Heart right ventricle (tissue), 16 donors: ENCODE measurements at regions of chr20 and their contacts with region 1.

Region 1: GRCh38 chr20:52601295-52601971 is 370.7 kb upstream of the TSHZ2 start:
- DNase-seq: no peak
- ATAC-seq: no peak
- H3K4me3 ChIP-seq: no peak overlapping the region
- H3K27ac ChIP-seq: no peak overlapping the region
- H3K4me1 ChIP-seq: no peaks in the 10 kb centered on the region
- H3K27me3 ChIP-seq: peaks cover 0 to 3% (median 0%) of the 10 kb centered on the region in 7 donors
- CTCF ChIP-seq: no peak

Region 2: GRCh38 chr20:52564637-52565036 is 36.8 kb before region 1 on chr20:
- intact Hi-C with region 1: loop called in 1 of 10 experiments (anchors 2 kb)
- DNase-seq: no peak
- ATAC-seq: no peak
- H3K4me3 ChIP-seq: no peak overlapping the region
- H3K27ac ChIP-seq: no peak overlapping the region
- H3K4me1 ChIP-seq: no peaks in the 10 kb centered on the region
- H3K27me3 ChIP-seq: no peaks in the 10 kb centered on the region
- CTCF ChIP-seq: no peak

Region 3: DNA sequence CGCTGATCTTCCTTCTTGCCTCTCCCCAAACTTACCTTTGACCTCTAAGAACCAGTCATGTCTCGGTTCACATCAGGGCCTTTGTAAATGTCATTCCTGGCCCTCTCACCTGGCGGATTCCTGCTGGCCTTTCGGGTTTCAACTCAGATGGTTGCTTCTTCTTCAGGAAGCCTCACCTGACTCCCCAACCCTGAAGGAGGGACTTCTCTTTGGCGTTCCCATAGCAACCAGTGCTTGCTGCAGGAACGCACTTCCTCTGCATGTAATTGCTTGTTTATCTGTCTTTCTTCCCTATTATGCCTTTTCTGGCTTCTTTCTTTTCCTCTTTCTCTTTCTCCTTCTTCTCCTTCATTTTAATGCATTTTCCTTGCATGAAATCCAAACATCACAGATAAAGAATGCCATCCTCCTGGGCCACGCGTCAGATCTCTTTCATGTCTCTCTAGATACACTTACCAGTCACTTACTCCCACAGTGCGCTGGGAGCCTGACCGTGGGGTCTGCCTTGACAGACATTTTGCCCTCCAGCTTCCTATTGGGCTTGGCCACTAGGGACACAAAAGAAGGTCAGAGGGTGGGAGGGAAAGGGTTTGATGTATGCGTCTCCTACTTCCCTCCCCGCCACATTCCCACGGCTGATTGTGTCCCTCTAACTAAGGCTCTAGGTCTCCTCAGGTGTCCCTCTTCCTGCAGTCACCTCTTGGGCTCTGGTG is 75.0 kb after region 1 on chr20:
- intact Hi-C with region 1: no loop called
- DNase-seq: no peak
- ATAC-seq: no peak
- H3K4me3 ChIP-seq: no peak overlapping the region
- H3K27ac ChIP-seq: no peak overlapping the region
- H3K4me1 ChIP-seq: peaks cover 0 to 6% (median 0%) of the 10 kb centered on the region in 9 donors
- H3K27me3 ChIP-seq: peaks cover 0 to 7% (median 0%) of the 10 kb centered on the region in 7 donors
- CTCF ChIP-seq: no peak

Region 4: DNA sequence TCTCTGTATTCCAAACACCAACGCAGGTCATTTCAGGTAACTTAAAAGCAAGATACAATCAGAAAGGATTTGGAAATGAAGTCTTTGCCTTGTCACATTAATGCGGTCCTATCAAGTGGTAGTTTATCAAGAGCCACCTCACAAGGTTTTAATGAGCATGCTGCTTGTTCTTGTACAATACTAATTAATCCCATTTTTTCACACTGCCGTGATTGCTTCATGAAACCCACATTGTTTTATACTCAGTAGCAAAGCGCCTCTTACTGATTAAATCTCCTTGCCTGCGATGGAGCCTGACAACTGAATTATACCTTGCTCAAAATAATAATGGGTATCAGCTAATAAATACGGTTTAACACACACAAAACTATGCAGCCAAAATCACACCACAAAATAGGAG is 136.6 kb after region 1 on chr20:
- intact Hi-C with region 1: no loop called
- DNase-seq: no peak
- ATAC-seq: no peak
- H3K4me3 ChIP-seq: no peak overlapping the region
- H3K27ac ChIP-seq: no peak overlapping the region
- H3K4me1 ChIP-seq: no peaks in the 10 kb centered on the region
- H3K27me3 ChIP-seq: peaks cover 0 to 4% (median 0%) of the 10 kb centered on the region in 7 donors
- CTCF ChIP-seq: no peak